Lower leg skin (tissue), 4 donors: ENCODE measurements at regions of chr14 and their contacts with region 1.

Region 1: GRCh38 chr14:86815341-86815740 is 1177.6 kb downstream of the GALC start:
- DNase-seq: no peak
- H3K4me3 ChIP-seq: no peak overlapping the region
- CTCF ChIP-seq: no peak
- POLR2A ChIP-seq: no peak

Region 2: GRCh38 chr14:85752175-85752574 is 1063.2 kb before region 1 on chr14:
- intact Hi-C with region 1: loop called (anchors 5 kb)
- DNase-seq: no peak
- H3K4me3 ChIP-seq: no peak overlapping the region
- CTCF ChIP-seq: no peak
- POLR2A ChIP-seq: no peak

Region 3: GRCh38 chr14:86938320-86938719 is 123.0 kb after region 1 on chr14:
- intact Hi-C with region 1: no loop called
- DNase-seq: no peak
- H3K4me3 ChIP-seq: no peak overlapping the region
- CTCF ChIP-seq: no peak
- POLR2A ChIP-seq: no peak